ENCODE measurements at regions of chr11 and their contacts with region 1.

Region 1: DNA sequence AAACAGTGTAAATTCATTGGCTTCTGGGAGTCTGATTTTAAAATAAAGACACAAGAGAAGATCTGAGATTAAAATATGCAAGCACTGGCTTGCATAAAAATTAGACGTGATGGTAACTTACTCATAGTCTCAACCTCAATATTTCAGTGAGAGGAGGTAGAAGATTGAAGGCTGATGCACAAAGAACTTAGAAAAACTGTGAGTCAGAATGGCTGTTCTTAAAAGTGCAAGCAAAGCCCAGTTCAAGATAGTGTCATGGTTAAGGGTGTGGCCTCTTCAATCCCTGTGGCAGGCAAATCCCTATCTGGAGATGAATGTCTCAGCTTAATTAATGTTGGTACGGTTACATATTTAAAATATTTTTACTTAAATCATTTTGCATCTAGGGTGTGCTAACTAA is 33.6 kb upstream of the FIBIN start:
- DNase-seq: no peak
- ATAC-seq: no peak
- H3K4me3 ChIP-seq: no peak overlapping the region
- H3K27ac ChIP-seq: no peak overlapping the region
- H3K4me1 ChIP-seq: no peaks in the 10 kb centered on the region
- H3K27me3 ChIP-seq: no peaks in the 10 kb centered on the region
- CTCF ChIP-seq: no peak

Region 2: DNA sequence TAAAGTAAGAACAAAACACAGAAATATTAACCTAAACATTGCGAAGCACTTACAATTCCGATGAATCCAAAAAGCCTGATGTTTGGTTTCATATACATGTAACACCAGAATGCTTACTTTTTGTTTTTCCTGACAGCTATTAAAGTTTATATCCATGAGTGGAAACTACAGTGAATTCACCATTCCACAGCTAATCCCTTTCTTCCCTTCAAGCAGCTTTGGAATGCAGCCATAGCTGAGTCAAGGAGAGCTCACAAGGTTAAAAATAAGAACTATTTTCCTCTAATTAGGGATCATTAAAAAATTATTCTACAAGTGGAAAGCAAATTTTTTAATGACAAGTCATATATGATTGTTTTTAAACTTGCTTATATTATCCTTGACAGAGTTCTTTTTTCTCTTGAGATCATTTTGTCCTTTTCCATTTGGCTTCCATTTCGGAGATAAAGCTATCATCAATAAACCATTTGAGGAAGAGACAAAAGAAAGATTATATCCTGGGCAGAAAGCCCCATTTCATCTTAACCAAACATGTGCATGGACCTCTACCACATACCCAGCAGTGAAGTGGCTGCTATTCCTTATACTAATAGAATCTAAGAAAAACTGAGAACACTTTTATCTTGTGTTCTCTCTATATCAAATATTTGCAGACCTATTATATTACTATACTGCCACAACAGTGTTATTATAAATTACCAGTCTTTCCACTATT is 13.9 kb after region 1 on chr11:
- CTCF ChIA-PET with region 1: no interaction called
- POLR2A ChIA-PET with region 1: no interaction called
- in situ Hi-C with region 1: no loop called
- intact Hi-C with region 1: no loop called
- DNase-seq: no peak
- ATAC-seq: no peak
- H3K4me3 ChIP-seq: no peak overlapping the region
- H3K27ac ChIP-seq: no peak overlapping the region
- H3K4me1 ChIP-seq: no peaks in the 10 kb centered on the region
- H3K27me3 ChIP-seq: no peaks in the 10 kb centered on the region
- CTCF ChIP-seq: no peak

Region 3: DNA sequence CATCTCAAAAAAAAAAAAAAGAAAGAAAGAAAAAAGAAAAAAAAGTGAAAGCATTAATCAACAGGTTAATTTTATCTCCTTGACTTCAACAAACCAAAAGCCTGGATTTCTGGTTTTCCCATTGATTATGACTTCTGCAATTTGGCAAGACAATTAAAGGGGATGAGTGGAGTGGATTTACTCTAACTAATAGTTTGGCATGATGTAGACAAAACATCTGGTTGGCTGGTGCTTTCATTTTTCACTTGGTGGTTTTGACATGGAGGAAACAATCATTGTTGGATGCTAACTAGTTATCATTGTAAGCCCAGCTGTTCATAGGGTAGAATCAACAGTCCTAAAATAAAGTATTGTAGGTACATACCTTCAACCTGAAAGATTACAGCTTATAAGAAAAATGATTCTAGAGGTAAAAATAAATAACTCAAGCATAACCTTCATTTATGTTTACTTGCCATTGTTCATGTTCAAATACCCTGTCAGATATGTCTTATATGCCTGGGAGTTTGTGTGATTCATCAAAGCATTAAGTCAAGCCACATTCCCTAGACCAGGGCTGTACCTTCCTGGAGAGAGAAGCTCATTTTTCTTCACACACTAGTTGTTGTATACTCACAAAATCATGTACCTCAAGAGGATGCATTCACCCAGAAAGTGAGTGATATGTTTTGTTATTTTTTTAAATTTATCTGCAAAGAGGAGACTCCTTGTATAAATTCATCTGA is 48.7 kb after region 1 on chr11:
- CTCF ChIA-PET with region 1: no interaction called
- POLR2A ChIA-PET with region 1: no interaction called
- in situ Hi-C with region 1: no loop called
- intact Hi-C with region 1: no loop called
- DNase-seq: no peak
- ATAC-seq: no peak
- H3K4me3 ChIP-seq: no peak overlapping the region
- H3K27ac ChIP-seq: no peak overlapping the region
- H3K4me1 ChIP-seq: no peaks in the 10 kb centered on the region
- H3K27me3 ChIP-seq: no peaks in the 10 kb centered on the region
- CTCF ChIP-seq: no peak

Region 4: DNA sequence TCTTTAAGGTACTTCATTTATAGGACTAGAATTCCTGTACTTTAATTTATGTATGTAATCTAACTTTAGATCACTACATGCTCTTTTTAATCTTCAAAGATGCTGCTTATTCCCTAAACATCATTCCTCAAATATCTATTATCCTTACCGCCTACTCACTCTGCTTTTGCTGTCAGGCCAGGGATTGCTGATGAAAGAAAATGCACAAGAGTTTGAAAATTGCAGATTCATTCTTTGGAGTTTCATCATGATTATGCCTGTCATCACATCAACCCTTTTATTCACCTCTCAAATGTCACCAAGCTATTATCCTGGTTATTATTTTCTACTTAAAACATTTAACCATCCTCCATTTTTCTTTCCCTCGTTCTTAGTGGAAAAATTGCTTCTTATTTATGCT is 1950.6 kb after region 1 on chr11:
- CTCF ChIA-PET with region 1: interaction called, 10 read pairs
- POLR2A ChIA-PET with region 1: no interaction called
- in situ Hi-C with region 1: no loop called
- intact Hi-C with region 1: no loop called
- DNase-seq: no peak
- ATAC-seq: no peak
- H3K4me3 ChIP-seq: no peak overlapping the region
- H3K27ac ChIP-seq: no peak overlapping the region
- H3K4me1 ChIP-seq: no peaks in the 10 kb centered on the region
- H3K27me3 ChIP-seq: no peaks in the 10 kb centered on the region
- CTCF ChIP-seq: no peak

Measured in Panc1 (cell line).